Mammary epithelial cell (primary cell): ENCODE measurements at regions of chr1 and their contacts with region 1.

Region 1: GRCh38 chr1:19596714-19597495 is 47.2 kb upstream of the NBL1 start:
- DNase-seq: peak; percentile 97
- H3K4me3 ChIP-seq: peak overlapping the region; percentile 92 to 96 (median 95)
- H3K27ac ChIP-seq: peak overlapping the region; percentile 96
- H3K4me1 ChIP-seq: peaks cover 14% of the 10 kb centered on the region
- H3K27me3 ChIP-seq: no peaks in the 10 kb centered on the region
- CTCF ChIP-seq: no peak

Region 2: GRCh38 chr1:19384113-19384512 is 212.8 kb before region 1 on chr1:
- CTCF ChIA-PET with region 1: no interaction called
- dilution Hi-C with region 1: no loop called
- in situ Hi-C with region 1: loop called in 1 of 2 experiments (anchors 10 kb)
- intact Hi-C with region 1: no loop called
- DNase-seq: no peak
- H3K4me3 ChIP-seq: no peak overlapping the region
- H3K27ac ChIP-seq: no peak overlapping the region
- H3K4me1 ChIP-seq: peaks cover 8% of the 10 kb centered on the region
- H3K27me3 ChIP-seq: no peaks in the 10 kb centered on the region
- CTCF ChIP-seq: no peak

Region 3: GRCh38 chr1:19439464-19440171 is 157.3 kb before region 1 on chr1:
- CTCF ChIA-PET with region 1: no interaction called
- dilution Hi-C with region 1: no loop called
- in situ Hi-C with region 1: no loop called
- intact Hi-C with region 1: no loop called
- DNase-seq: no peak
- H3K4me3 ChIP-seq: no peak overlapping the region
- H3K27ac ChIP-seq: peak overlapping the region; percentile 59
- H3K4me1 ChIP-seq: peaks cover 63% of the 10 kb centered on the region
- H3K27me3 ChIP-seq: no peaks in the 10 kb centered on the region
- CTCF ChIP-seq: peak in 1 of 2 donors; percentile 27

Region 4: DNA sequence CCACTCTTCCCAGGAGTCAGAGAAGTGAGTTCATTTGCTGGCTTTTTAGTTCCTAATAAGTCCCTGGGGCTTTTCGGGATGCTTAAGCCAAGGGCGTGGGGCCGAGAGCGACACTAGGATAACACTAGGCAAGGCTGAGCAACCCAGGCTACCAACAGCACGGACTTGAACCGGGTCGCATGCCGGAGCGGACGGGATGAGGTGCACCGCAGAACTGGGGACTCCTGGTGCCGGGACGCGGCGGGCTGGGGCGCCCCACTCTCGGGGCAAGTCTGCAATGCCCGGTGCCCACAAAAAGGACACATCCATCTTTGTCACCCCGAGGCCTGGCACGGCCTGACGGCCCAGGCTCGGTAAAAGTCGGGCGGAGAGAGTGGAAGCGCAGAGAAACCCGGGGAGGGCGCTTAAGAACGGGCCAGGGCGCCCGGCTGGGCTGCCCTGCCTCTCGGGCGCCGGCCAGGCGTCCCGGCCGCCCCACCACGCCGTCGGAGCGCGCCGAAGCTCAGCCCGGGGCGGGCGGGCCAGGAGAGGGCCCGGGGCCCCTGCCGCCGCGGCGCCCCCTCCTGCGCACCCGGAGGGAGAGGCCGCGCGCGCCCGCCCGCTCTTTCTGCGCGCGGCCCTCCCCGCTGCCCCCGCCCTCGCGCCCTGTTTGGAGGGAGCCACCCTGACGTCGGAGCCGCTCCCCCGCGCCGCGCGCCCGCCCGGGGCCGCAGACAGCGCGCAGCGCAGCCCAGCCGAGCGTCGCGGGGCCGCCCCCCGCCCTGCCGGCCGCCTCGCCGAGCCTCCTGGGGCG is 46.9 kb after region 1 on chr1 and contains the start of gene NBL1:
- CTCF ChIA-PET with region 1: no interaction called
- dilution Hi-C with region 1: loop called (anchors 5 kb)
- in situ Hi-C with region 1: loop called in 1 of 2 experiments (anchors 5 kb)
- intact Hi-C with region 1: loop called (anchors 2 kb)
- DNase-seq: peak; percentile 57
- H3K4me3 ChIP-seq: peak within 1 kb of the TSS; percentile 65 to 88 (median 81)
- H3K27ac ChIP-seq: peak within 1 kb of the TSS; percentile 80
- H3K4me1 ChIP-seq: peaks cover 63% of the 10 kb centered on the region
- H3K27me3 ChIP-seq: no peaks in the 10 kb centered on the region
- CTCF ChIP-seq: no peak
- total RNA-seq, gene NBL1: 49.7 to 132 TPM